ENCODE measurements at regions of chr13 and their contacts with region 1.

Region 1: GRCh38 chr13:27826379-27827353 is 34.4 kb downstream of the GSX1 start:
- DNase-seq: peak in 1 of 2 donors; percentile 96
- H3K4me3 ChIP-seq: peak overlapping the region in 1 of 2 donors; percentile 12
- H3K27ac ChIP-seq: no peak overlapping the region
- H3K4me1 ChIP-seq: peaks cover 10% of the 10 kb centered on the region
- H3K27me3 ChIP-seq: no peaks in the 10 kb centered on the region
- CTCF ChIP-seq: peak; percentile 81 to 87 (median 83)
- POLR2A ChIP-seq: no peak

Region 2: DNA sequence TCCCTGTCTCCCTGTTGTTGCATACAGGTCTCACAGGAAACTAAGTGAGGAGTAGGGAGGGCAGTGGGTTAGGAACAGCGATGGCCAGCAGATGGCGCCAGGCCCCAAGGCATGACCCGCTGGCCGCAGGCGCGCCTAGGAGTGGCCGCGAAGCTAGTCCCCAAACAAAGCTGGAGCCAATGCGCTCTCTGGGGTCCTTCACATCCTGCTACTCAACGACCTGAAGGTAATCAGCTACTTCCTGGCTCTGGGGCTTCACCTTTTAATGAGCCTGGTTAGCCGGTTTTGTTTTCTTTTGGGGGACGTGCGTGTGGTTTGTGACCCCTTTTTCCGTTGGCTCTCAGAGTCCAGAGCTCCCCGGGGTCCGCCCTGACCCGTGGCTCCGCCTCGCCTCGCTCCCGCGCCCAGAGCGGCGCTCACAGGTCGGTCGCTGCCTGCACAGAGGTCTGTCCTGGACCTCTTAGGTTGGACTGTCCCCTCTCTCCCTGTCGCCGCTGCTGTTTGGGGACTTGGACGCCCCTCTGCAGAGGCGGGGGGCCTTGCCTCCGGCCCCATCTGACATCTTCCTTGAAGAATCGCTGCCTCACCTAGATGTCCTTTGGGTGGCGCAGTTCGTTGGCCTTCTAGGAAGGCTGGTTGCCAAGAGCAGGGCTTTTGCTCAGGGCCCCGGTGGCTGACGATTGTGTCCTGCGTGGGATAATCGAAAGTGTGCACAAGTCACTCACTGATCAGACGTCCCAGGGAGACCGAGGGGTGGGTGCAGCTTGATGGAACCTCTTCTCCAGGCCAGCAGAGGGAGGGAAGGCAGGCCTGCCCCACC is 464.4 kb before region 1 on chr13:
- intact Hi-C with region 1: loop called (anchors 5 kb)
- DNase-seq: no peak
- H3K4me3 ChIP-seq: peak overlapping the region; percentile 39 to 44
- H3K27ac ChIP-seq: no peak overlapping the region
- H3K4me1 ChIP-seq: peaks cover 12% of the 10 kb centered on the region
- H3K27me3 ChIP-seq: no peaks in the 10 kb centered on the region
- CTCF ChIP-seq: peak; percentile 85 to 93 (median 91)
- POLR2A ChIP-seq: no peak

Region 3: GRCh38 chr13:27533155-27533643 is 293.5 kb before region 1 on chr13:
- intact Hi-C with region 1: loop called (anchors 10 kb)
- DNase-seq: no peak
- H3K4me3 ChIP-seq: no peak overlapping the region
- H3K27ac ChIP-seq: no peak overlapping the region
- H3K4me1 ChIP-seq: peaks cover 6% of the 10 kb centered on the region
- H3K27me3 ChIP-seq: no peaks in the 10 kb centered on the region
- CTCF ChIP-seq: peak; percentile 52 to 71 (median 66)
- POLR2A ChIP-seq: no peak

Region 4: DNA sequence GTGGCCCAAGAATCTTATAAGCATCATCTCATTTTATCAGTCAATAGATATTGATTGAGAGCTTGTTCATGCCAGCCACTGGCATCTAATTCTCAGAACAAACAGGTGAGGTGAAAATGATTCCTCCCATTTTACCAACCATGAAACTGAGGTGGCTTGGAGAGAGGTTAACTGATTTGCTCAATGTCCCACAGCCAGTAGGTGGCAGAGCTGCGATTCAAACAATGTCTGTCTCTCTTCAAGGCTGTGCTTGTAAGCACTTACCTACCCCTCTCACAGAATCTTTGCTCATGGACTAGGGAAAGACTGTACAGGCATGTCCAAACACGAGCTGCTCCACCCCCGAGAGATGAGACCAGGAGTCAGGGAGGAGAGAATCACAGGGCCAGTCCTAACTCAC is 55.9 kb before region 1 on chr13:
- intact Hi-C with region 1: no loop called
- DNase-seq: no peak
- H3K4me3 ChIP-seq: no peak overlapping the region
- H3K27ac ChIP-seq: no peak overlapping the region
- H3K4me1 ChIP-seq: no peaks in the 10 kb centered on the region
- H3K27me3 ChIP-seq: no peaks in the 10 kb centered on the region
- CTCF ChIP-seq: no peak
- POLR2A ChIP-seq: no peak

Region 5: DNA sequence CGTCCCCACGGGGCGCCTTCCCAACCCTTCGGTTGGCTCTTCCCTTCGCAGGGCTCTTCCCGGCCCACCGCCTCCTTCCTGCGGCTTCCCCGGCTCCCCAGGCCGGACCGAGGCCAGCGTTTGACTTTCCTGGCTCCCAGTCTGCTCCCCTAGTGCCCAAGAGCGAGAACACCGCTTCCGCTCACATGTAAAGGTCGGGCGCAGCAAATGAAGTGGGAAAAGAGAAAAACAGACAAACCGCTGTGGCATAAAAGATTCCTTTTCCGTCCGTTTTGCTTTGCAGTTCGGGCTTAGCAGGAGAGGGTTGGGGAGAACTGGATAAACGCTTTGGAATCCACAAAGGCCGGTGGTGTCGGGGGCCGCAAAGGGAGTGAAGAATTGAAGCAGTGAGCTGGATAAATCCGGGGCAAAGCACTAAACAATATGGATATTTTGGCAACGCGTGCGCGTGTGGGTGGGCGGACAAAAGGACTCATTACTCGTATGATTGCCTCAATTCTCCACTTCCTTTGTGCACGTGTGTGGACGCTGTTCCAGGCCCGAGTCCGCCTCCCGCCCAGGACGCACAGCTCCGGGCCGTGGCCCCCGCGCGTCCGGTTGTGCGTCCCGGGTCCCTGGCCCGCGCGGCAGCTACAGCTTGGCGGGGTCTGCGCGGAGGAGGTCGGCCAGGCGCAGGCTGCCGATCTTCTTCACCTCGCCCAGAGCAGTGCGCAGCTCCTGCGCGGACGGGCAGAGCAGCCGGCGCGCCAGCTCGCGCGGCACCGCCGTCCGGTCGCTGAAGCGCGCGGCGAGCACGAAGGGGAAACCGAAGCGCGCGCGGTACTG is 151.0 kb after region 1 on chr13:
- intact Hi-C with region 1: loop called (anchors 10 kb)
- DNase-seq: no peak
- H3K4me3 ChIP-seq: peak overlapping the region in 1 of 2 donors; percentile 16
- H3K27ac ChIP-seq: no peak overlapping the region
- H3K4me1 ChIP-seq: peaks cover 18% of the 10 kb centered on the region
- H3K27me3 ChIP-seq: no peaks in the 10 kb centered on the region
- CTCF ChIP-seq: no peak
- POLR2A ChIP-seq: no peak

Region 6: GRCh38 chr13:29810145-29810742 is 1983.6 kb after region 1 on chr13:
- intact Hi-C with region 1: no loop called
- DNase-seq: no peak
- H3K4me3 ChIP-seq: no peak overlapping the region
- H3K27ac ChIP-seq: no peak overlapping the region
- H3K4me1 ChIP-seq: peaks cover 55% of the 10 kb centered on the region
- H3K27me3 ChIP-seq: no peaks in the 10 kb centered on the region
- CTCF ChIP-seq: no peak
- POLR2A ChIP-seq: no peak